ENCODE measurements at regions of chr4 and their contacts with region 1.

Region 1: DNA sequence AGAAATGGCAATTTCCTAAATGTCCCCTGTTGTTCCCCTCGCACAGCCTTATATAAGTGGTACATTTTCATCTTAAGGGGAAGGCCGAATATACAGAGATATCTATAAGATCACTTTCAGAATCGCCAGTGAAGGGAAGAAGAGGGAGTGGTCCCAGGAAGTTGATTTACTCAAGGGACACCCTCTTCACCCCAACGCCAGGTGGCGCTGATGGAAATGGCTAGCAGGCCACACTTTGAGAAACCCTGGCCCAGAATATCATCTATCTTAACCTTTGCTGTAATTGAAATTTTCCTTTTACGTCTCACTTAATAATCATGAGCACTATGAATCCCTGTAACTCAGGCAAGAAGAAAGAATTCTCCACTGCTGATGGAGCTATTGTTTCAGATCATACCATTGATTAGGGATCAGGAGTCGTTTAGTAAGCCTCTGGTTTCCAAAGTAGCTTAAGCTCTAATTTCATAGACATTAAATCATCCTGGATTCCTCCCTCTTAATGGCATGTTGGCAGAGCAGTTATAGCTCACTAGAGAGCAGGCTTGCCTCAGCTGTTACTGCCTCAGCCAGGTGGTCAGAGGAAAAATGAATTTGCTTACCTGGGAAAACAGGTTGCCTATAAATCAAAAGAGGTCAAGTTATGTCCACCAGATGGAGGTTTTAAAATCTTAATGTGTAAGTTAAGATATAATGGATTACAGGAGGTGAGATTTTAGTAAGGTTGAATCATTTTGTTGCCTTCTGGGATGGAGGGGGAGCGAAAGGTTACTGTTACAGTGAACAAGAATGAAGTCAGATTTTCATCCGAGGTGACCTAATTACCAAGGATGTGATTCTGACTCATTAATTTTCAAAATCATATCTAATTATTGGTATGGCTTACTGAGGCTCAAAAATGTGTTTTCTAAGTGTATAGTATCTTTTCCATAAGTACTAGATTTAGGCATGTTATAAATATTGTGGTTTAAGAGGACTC is 941.2 kb upstream of the TENM3 start:
- H3K4me3 Mint-ChIP-seq: no peak overlapping the region
- H3K27ac Mint-ChIP-seq: no peak overlapping the region
- H3K4me1 Mint-ChIP-seq: no peaks in the 10 kb centered on the region
- H3K27me3 Mint-ChIP-seq: no peaks in the 10 kb centered on the region

Region 2: GRCh38 chr4:181528570-181529184 is 226.7 kb after region 1 on chr4:
- intact Hi-C with region 1: loop called (anchors 2 kb)
- H3K4me3 Mint-ChIP-seq: no peak overlapping the region
- H3K27ac Mint-ChIP-seq: no peak overlapping the region
- H3K4me1 Mint-ChIP-seq: no peaks in the 10 kb centered on the region
- H3K27me3 Mint-ChIP-seq: no peaks in the 10 kb centered on the region

Measured in dendritic cell treated with granulocyte-macrophage colony-stimulating factor and Interleukin-4, amounts not matched to agents 40 ng/mL and 50 ng/mL, for 4 days (primary cell).